Posterior vena cava (tissue), 2 donors: ENCODE measurements at regions of chrX and their contacts with region 1.

Region 1: DNA sequence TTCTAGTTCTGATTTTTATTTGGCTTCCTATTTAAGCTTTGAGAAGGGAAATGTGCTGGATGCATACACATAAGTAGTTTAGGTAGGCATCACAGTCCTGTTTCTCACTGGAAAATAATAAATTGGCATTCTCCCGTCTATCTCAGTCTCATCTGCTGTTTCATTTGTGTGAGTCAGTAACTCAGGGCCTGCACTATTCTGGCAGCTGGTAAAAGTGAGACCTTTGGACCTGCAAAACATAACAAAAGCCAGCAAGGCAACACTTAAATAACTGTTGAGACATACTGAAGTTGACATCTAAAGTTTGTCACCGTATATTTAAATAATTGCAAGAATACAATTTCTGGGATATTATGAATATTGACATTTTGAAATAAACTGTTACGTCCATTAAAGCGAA is 8.6 kb upstream of the UBQLN2 start:
- DNase-seq: no peak

Region 2: DNA sequence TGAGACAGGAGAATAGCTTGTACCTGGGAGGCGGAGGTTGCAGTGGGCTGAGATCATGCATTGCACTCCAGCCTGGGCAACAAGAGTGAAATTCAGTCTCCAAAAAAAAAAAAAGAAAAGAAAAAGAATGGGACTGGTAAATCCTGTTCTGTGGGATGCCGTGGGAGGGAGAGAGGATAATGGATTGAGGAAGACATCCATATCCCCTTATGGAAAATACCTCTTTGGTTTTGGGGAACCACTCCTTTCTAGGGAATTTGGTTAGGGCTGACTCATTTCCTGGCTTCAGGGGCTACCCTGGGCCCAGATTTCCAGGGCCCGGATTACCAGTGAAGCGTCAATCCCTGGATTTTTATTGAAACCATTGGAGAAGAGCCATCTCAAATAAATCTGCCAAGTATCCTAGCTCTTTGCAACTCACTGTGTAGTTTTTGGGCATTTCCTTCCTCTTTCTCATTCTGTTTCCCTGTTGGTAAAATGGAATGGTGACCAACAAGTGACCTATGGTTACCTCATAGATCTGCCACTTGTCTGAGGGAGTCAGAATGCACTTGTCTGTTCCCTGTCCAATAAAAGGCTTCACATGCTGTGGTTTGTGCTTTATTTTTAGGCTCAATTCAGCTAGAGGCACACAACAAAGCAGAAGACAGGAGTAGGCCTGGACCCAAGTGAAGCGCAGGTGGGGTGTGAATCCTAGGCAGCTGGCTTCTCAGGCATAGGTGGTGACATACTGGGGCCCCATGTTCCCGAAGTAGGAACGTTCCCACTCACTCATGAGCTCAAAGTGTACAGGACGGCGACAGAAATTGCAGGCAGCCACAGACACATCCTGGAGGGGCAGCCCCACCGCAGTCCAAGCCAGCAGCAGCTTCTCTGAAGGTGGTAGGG is 1546.2 kb before region 1 on chrX:
- intact Hi-C with region 1: no loop called
- DNase-seq: no peak

Region 3: GRCh38 chrX:56232221-56233082 is 322.4 kb before region 1 on chrX and contains the start of gene KLF8:
- intact Hi-C with region 1: loop called in 1 of 2 experiments (anchors 5 kb)
- DNase-seq: peak; percentile 81
- total RNA-seq, gene KLF8: 20.5 to 24.5 TPM

Region 4: DNA sequence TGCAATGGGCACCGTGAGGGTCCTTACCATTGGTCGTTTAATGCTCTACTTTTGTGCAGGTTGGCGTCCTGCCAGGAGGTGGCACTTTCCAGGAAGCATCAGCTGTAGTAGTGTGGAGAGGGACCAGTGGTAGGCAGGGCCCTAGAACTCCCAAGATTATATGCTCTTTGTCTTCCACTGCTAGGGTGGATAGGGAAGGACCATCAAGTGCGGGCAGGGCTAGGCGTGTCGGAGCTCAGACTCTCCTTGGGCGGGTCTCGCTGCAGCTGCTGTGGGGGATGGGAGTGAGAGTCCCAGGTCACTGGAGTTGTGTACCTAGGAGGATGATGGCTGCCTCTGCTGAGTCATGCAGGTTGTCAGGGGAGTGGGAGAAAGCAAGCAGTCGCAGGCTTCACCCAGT is 188.0 kb before region 1 on chrX:
- intact Hi-C with region 1: no loop called
- DNase-seq: peak; percentile 72

Region 5: GRCh38 chrX:56462389-56462788 is 92.5 kb before region 1 on chrX:
- intact Hi-C with region 1: no loop called
- DNase-seq: no peak

Region 6: GRCh38 chrX:56588397-56589188 is 33.7 kb after region 1 on chrX:
- intact Hi-C with region 1: no loop called
- DNase-seq: no peak